ENCODE measurements at regions of chr3 and their contacts with region 1.

Region 1: GRCh38 chr3:140206196-140207048 is 271.4 kb downstream of the CLSTN2 start:
- DNase-seq: peak in 1 of 3 donors; percentile 40
- ATAC-seq: peak; percentile 67 to 73
- H3K4me3 ChIP-seq: no peak overlapping the region
- H3K27ac ChIP-seq: no peak overlapping the region
- H3K4me1 ChIP-seq: no peaks in the 10 kb centered on the region
- H3K27me3 ChIP-seq: no peaks in the 10 kb centered on the region

Region 2: DNA sequence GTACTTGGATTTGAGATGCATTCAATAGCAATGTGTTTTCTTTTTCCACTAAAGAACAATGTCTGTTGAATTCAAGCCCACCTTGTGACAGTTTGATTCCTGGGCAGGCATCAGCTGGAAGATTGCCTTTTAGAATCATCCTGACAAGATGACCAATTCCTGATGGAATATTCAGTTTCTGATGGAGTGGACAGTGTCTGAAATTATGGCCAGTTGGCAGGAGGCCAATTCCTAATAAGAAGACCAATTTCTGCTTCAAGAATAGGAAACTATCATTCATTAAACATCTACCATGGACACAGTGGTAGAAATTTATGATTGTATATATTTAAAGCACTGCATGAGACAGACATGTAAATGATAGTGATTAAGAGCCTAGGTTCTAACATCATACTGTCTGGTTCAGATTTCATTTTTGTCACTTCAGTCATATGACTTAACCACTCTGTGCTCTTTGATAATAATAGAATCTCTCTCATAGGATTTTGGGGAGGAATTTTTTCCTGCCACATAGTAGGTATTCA is 137.9 kb before region 1 on chr3:
- intact Hi-C with region 1: no loop called
- DNase-seq: no peak
- ATAC-seq: no peak
- H3K4me3 ChIP-seq: no peak overlapping the region
- H3K27ac ChIP-seq: no peak overlapping the region
- H3K4me1 ChIP-seq: no peaks in the 10 kb centered on the region
- H3K27me3 ChIP-seq: no peaks in the 10 kb centered on the region

Region 3: GRCh38 chr3:140093742-140094141 is 112.7 kb before region 1 on chr3:
- intact Hi-C with region 1: loop called in 1 of 4 experiments (anchors 10 kb)
- DNase-seq: peak; percentile 41 to 71 (median 66)
- ATAC-seq: peak; percentile 88 to 89
- H3K4me3 ChIP-seq: no peak overlapping the region
- H3K27ac ChIP-seq: no peak overlapping the region
- H3K4me1 ChIP-seq: no peaks in the 10 kb centered on the region
- H3K27me3 ChIP-seq: no peaks in the 10 kb centered on the region

Region 4: DNA sequence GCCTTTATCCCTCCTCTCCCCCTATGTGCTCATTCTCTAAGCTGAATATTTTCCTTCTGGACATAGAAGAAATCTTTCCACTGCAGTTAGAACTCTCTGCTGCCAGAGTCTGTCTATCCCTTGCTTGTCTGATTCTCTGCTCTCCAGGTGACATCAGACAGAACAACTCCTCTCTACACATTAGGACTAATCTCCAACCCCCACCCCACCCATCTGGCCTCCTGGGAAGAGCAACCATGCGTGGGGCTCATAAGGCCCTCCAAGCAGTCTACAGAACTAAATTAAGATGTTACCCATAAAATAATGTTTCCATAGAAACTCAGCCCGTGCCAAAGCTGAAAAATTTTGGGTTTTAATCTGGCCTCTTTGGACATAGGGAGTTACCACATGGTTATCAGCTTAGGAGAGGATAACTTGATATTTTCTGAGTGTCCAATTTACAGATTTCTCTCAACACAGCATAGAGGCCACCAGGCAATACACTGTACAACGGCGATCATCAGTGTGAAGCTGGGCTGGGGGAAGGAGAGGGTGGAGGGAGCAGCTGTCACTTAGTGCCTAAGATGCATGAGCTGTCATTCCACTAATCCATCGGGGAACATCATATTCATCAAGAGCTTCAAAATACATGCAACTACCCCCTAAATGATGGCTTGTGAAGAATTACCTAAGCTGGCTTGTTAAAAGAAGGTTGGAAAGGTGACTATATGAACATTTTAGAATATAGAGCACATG is 72.0 kb before region 1 on chr3:
- intact Hi-C with region 1: loop called in 1 of 4 experiments (anchors 10 kb)
- DNase-seq: no peak
- ATAC-seq: no peak
- H3K4me3 ChIP-seq: no peak overlapping the region
- H3K27ac ChIP-seq: no peak overlapping the region
- H3K4me1 ChIP-seq: peaks cover 4% of the 10 kb centered on the region
- H3K27me3 ChIP-seq: no peaks in the 10 kb centered on the region

Measured in right cardiac atrium (tissue), 5 donors.